ENCODE measurements at regions of chr12 and their contacts with region 1.

Region 1: DNA sequence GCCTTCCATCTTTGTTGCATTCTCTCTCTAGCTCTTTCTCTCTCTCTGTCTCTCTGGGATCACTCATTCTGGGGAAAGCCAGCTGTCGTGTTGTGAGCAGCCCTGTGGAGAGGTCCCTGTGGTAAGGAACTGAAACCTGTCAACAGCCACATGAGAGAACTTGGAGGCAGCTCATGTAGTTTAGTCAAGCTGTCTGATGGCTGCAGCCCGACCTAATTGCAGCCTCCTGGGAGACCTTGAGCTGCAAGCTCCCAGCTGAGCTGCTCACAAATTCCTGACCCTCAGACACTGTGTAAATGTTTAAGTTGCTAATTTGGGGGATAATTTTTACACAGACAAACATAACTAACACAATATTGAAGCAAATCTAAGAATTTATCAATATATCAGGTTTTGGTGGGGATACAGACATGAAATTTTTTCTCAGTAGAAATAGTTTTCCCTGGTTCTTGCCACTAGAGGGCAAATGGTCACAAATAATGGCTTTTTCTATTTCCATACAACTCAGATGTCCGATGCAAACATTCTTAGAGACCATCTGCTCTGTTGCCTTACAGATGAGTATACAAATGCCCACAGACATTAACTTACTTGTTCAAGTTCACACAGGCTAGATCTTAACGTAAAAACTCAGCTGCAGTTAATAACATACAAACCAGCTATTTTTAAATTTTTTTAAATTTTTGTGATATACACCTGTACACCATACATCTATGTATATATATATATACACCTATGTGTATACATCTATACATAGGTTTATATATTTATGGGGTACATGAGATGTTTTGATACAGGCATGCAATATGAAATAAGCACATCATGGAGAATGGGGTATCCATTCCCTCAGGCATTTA is 15.5 kb upstream of the KRR1 start:
- DNase-seq: no peak
- ATAC-seq: no peak
- H3K4me3 ChIP-seq: no peak overlapping the region
- H3K27ac ChIP-seq: no peak overlapping the region
- H3K4me1 ChIP-seq: no peaks in the 10 kb centered on the region
- H3K27me3 ChIP-seq: no peaks in the 10 kb centered on the region
- CTCF ChIP-seq: peak; percentile 56

Region 2: DNA sequence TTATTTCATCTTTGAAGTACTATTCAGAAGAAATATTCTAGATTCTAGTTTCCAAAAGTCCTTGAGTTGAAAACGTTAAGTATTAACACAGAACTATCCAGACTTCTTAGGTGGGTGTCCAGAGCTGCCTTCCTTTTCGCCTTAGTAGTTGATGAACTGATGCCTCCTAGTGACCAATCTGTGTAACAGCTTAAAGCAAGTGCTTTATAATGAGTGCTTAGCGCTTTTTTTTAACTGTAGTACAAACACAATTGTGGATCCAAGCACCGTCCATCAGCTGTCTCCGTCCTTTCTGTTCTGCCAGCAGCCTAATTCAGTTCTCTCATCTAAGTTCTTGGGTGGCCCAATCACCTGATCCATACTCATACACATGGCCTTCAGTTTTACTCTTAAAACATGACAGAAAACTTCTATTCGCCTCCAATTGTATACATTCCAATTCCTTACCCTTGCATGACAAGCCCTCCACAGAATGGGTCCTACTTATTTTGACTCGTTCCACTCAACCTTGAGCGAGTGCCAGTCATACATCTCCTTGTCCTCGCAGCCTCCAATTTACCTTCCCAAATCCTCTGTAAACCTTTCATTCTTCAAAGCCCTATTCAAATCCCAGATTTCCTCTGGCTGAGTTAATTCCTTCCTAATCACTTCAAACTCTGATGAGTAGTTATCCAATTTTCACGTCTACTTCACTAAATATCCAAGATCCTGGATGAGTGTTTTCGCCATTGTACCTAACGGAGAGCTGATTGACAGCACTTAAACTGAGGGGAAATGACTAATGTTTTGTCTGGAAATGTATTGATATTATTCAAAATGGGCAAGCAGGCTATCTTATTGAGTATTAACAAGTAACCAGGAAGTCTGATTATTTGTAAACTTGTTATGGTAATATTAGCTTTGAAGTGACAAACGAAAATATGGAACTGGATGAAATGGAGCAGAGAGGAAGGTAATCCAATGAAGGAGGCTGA is 510.5 kb after region 1 on chr12:
- intact Hi-C with region 1: loop called (anchors 5 kb)
- DNase-seq: no peak
- ATAC-seq: peak; percentile 58 to 75 (median 66)
- H3K4me3 ChIP-seq: no peak overlapping the region
- H3K27ac ChIP-seq: no peak overlapping the region
- H3K4me1 ChIP-seq: peaks cover 6% of the 10 kb centered on the region
- H3K27me3 ChIP-seq: no peaks in the 10 kb centered on the region
- CTCF ChIP-seq: peak; percentile 77

Measured in psoas muscle (tissue), 8 donors.